ENCODE measurements at regions of chr6 and their contacts with region 1.

Region 1: GRCh38 chr6:2634139-2634964 is 116.4 kb downstream of the MYLK4 start:
- DNase-seq: peak; percentile 84
- ATAC-seq: peak; percentile 98
- H3K4me3 Mint-ChIP-seq: peak overlapping the region; percentile 56
- H3K27ac Mint-ChIP-seq: peak overlapping the region; percentile 32
- H3K4me1 Mint-ChIP-seq: peaks cover 9% of the 10 kb centered on the region
- H3K27me3 Mint-ChIP-seq: peaks cover 3% of the 10 kb centered on the region
- CTCF ChIP-seq: peak; percentile 99

Region 2: DNA sequence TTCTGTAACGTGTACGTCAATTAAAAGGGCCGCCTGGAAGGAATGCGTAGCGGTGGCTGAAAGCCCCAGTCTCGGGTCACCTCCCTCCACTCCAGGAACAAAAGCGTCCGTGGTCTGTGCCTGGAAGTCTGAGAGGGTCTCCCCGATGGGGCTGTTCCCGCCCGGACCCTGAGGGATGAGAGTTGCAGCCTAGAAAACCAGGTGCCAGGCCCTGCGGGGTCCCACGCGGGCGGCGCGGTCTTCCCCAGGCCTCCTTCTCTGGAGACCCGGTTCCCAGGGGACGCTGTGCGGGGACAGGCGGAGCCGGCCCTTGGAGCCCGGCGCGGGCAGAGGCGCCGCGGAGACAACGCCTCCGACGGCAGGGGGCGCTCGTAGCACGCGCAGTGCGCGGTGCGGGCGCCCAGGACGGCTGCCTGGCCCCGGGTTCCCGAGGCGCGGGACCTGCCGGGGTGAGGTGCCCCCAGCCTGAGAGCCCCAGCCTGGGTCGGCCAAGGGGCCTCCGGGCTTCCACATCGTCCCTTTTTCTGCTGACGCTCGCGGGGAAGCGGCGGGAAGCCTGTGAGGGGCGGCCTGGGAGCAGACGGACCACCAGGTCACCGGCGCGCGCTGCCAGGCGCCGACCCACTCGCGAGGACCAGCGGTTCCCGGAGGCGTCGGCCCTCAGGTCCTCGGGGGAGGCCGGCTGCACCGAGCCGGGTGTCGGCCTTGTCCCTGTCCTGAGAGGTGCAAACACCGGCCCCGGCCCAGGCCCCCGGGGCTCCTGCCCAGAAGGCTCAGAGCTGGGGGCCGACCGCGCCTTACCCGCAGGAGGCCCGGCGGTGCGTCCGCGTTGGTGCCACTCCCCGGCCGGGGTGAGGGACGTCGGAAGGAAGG is 1030.0 kb before region 1 on chr6:
- CTCF ChIA-PET with region 1: interaction called, 17 read pairs
- POLR2A ChIA-PET with region 1: no interaction called
- intact Hi-C with region 1: no loop called
- DNase-seq: peak; percentile 58
- ATAC-seq: peak; percentile 76
- H3K4me3 Mint-ChIP-seq: no peak overlapping the region
- H3K27ac Mint-ChIP-seq: no peak overlapping the region
- H3K4me1 Mint-ChIP-seq: peaks cover 34% of the 10 kb centered on the region
- H3K27me3 Mint-ChIP-seq: peaks cover 78% of the 10 kb centered on the region
- CTCF ChIP-seq: peak; percentile 89

Region 3: GRCh38 chr6:2353412-2354137 is 280.8 kb before region 1 on chr6:
- CTCF ChIA-PET with region 1: interaction called, 12 read pairs
- POLR2A ChIA-PET with region 1: no interaction called
- intact Hi-C with region 1: no loop called
- DNase-seq: peak; percentile 80
- ATAC-seq: peak; percentile 56
- H3K4me3 Mint-ChIP-seq: no peak overlapping the region
- H3K27ac Mint-ChIP-seq: no peak overlapping the region
- H3K4me1 Mint-ChIP-seq: no peaks in the 10 kb centered on the region
- H3K27me3 Mint-ChIP-seq: no peaks in the 10 kb centered on the region
- CTCF ChIP-seq: peak; percentile 88

Region 4: GRCh38 chr6:2598867-2599266 is 35.5 kb before region 1 on chr6:
- CTCF ChIA-PET with region 1: interaction called, 16 read pairs
- POLR2A ChIA-PET with region 1: no interaction called
- intact Hi-C with region 1: no loop called
- DNase-seq: no peak
- ATAC-seq: no peak
- H3K4me3 Mint-ChIP-seq: no peak overlapping the region
- H3K27ac Mint-ChIP-seq: no peak overlapping the region
- H3K4me1 Mint-ChIP-seq: no peaks in the 10 kb centered on the region
- H3K27me3 Mint-ChIP-seq: peaks cover 7% of the 10 kb centered on the region
- CTCF ChIP-seq: no peak

Region 5: GRCh38 chr6:2614846-2615245 is 19.5 kb before region 1 on chr6:
- CTCF ChIA-PET with region 1: interaction called, 12 read pairs
- POLR2A ChIA-PET with region 1: no interaction called
- intact Hi-C with region 1: no loop called
- DNase-seq: no peak
- ATAC-seq: no peak
- H3K4me3 Mint-ChIP-seq: no peak overlapping the region
- H3K27ac Mint-ChIP-seq: no peak overlapping the region
- H3K4me1 Mint-ChIP-seq: no peaks in the 10 kb centered on the region
- H3K27me3 Mint-ChIP-seq: peaks cover 28% of the 10 kb centered on the region
- CTCF ChIP-seq: no peak

Region 6: GRCh38 chr6:2646346-2646745 is 12.0 kb after region 1 on chr6:
- CTCF ChIA-PET with region 1: interaction called, 35 read pairs
- POLR2A ChIA-PET with region 1: no interaction called
- intact Hi-C with region 1: no loop called
- DNase-seq: no peak
- ATAC-seq: no peak
- H3K4me3 Mint-ChIP-seq: no peak overlapping the region
- H3K27ac Mint-ChIP-seq: no peak overlapping the region
- H3K4me1 Mint-ChIP-seq: no peaks in the 10 kb centered on the region
- H3K27me3 Mint-ChIP-seq: peaks cover 29% of the 10 kb centered on the region
- CTCF ChIP-seq: no peak

Region 7: DNA sequence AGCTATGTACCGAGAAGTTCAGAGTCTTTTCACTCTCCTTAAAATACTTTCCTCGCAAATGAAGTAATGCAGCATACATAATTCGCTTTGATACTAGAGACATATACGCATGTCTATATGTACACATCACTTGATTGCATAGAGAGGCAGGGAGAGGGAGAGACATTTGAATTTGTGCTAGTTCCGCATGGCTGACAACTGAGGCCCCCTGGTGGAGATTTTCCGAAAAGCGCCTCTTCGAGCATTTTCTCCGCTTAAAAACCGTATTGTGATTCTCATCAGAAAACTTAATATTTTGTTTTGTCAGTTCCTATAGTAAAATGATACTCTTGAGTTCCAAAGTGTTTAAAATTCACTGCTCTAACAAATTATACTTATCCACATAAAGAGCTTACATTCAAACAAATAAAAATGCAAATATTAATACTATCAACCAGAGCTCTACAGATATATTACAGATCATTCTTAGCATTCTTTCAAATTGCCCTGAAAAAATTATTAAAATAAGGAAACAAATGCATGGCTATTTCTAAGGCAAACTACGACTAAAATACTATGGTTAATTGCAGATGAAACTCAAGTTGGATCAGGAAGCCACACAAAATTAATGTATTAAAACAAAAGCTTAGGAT is 115.7 kb after region 1 on chr6:
- CTCF ChIA-PET with region 1: interaction called, 23 read pairs
- POLR2A ChIA-PET with region 1: no interaction called
- intact Hi-C with region 1: no loop called
- DNase-seq: peak; percentile 82
- ATAC-seq: peak; percentile 74
- H3K4me3 Mint-ChIP-seq: no peak overlapping the region
- H3K27ac Mint-ChIP-seq: no peak overlapping the region
- H3K4me1 Mint-ChIP-seq: peaks cover 7% of the 10 kb centered on the region
- H3K27me3 Mint-ChIP-seq: peaks cover 8% of the 10 kb centered on the region
- CTCF ChIP-seq: peak; percentile 91

Measured in activated CD8-positive, alpha-beta T cell treated with anti-CD3 and anti-CD28 coated beads for 36 hours (primary cell).